Lower leg skin (tissue), 4 donors: ENCODE measurements at regions of chr18 and their contacts with region 1.

Region 1: DNA sequence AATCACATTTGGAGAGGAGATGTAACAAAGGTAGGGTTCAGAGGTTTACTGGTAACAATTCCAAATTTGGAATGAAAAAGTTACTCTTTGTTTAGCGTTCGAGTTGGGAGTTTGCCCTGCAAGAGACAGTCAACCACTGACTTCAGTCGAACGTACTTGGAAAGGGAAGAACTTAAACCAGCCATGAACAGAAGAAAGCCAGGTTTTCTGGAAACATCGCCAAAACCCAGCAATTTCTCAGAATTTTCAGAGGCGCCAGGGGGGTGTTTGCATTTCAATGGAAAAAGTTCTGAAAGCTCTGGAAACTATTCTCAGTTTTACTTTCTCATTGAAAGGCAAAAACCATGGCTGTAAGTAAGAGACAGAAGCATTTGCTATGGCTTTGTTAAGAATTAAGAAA is 28.5 kb upstream of the AQP4 start:
- DNase-seq: no peak
- H3K4me3 ChIP-seq: no peak overlapping the region
- CTCF ChIP-seq: no peak
- POLR2A ChIP-seq: no peak

Region 2: GRCh38 chr18:26956863-26957262 is 62.9 kb after region 1 on chr18:
- intact Hi-C with region 1: loop called (anchors 10 kb)
- DNase-seq: no peak
- H3K4me3 ChIP-seq: no peak overlapping the region
- CTCF ChIP-seq: no peak
- POLR2A ChIP-seq: no peak